ENCODE measurements at regions of chr15 and their contacts with region 1.

Region 1: DNA sequence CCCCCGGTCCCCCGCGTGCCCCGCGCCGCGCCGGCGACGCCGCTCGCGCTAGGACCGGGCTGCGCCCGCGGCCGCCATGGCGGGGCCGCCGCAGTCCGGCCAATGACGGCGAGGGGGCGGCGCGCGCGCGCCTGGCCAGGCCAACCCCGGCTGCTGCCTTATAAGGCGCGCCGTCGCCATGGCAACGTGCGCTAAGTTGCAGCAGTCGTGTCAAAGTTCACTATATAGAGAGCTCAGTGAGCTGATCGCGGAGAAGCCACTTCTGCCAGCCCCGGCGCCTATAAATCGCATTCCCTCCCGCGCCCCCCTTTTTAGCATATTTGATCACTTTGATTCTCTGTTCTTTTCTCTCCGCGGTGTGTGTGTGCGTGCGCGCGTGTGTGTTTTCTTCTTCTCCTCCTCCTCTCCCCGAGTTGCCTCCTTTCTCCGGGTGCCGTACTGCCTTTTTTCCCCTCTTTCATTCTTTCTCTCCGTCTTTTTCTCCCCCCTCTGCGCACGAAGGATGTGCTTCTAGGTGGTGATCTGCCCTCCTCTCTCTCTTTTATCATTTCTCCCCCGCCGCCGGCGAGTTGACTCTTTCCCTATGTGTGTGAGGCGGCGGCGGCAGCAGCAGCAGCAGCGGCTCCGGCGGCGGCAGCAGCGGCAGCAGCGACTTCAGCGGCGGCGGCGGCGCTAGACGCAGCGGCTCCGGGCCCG is at the start of gene NR2F2:
- DNase-seq: peak; percentile 53
- ATAC-seq: peak; percentile 70
- H3K4me3 ChIP-seq: peak within 1 kb of the TSS; percentile 78
- H3K27ac ChIP-seq: no peak within 1 kb of the TSS
- H3K4me1 ChIP-seq: peaks cover 6% of the 10 kb centered on the region; the same call in 1 of the 2 replicates
- H3K27me3 ChIP-seq: peaks cover 0 to 14% of the 10 kb centered on the region in 2 experiments; a peak in 1 of 4 replicates
- CTCF ChIP-seq: no peak
- EP300 ChIP-seq: no peak
- POLR2A ChIP-seq: no peak
- RAD21 ChIP-seq: no peak
- polyA plus RNA-seq, gene NR2F2: 2.3 to 3.2 TPM

Region 2: DNA sequence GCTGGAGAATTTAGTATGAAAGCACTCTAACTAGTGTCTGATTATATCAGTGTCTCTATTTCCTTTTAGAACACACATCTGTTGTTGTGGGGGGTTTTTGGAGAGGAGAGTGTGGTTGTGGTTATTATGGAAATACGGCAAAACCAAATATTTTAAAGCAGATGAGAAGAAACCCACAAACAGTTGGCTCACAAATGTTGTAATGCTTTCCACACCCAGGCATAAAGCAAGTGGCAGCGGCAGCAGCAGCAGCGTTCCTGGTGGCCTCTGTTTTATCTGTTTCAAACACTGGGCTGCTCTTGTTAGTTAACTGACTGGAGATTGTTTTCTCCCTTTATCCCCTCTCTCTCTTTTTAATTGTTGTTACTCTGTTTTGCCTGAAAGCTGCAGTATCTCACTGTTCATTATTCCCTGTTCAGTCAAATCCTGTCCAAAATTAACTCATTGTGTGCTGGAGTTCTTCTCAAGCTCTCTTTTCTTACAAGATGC is 1045.6 kb before region 1 on chr15:
- CTCF ChIA-PET with region 1: interaction called, 5 read pairs
- POLR2A ChIA-PET with region 1: no interaction called
- RAD21 ChIA-PET with region 1: interaction called, 22 read pairs
- SMC1A ChIA-PET with region 1: interaction called, 17 read pairs
- in situ Hi-C with region 1: no loop called
- intact Hi-C with region 1: no loop called
- DNase-seq: no peak
- ATAC-seq: peak; percentile 68
- H3K4me3 ChIP-seq: no peak overlapping the region
- H3K27ac ChIP-seq: no peak overlapping the region
- H3K4me1 ChIP-seq: peaks cover 4% of the 10 kb centered on the region; the same call in 1 of the 2 replicates
- H3K27me3 ChIP-seq: no peaks in the 10 kb centered on the region
- CTCF ChIP-seq: peak in 1 of 3 experiments; percentile 4; a peak in 1 of 6 replicates
- EP300 ChIP-seq: peak in 1 of 2 experiments; percentile 45; a peak in 1 of 4 replicates
- POLR2A ChIP-seq: no peak
- RAD21 ChIP-seq: 0 out of 2 replicates have a peak, but pooled peaks have one; percentile 18

Region 3: DNA sequence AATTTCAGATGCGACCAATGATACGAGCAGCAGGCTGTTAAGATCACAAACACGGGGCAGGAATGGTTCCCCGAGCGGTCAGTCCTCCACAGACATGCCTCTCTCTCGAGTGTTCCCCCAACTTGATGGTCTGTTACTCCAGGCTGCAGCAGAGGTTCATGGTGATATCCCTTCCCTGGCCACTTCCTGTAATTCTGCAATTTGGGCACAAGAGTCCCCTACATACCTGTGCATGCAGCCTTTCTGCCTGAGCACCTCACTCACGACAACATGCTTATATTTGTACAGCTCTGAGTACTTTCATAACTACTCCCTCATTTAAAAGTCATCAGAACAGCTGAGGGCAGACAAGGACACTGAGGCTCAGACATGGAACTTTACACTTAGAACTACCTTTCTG is 408.2 kb before region 1 on chr15:
- CTCF ChIA-PET with region 1: interaction called, 9 read pairs
- POLR2A ChIA-PET with region 1: no interaction called
- RAD21 ChIA-PET with region 1: interaction called, 9 read pairs
- SMC1A ChIA-PET with region 1: interaction called, 6 read pairs
- in situ Hi-C with region 1: no loop called
- intact Hi-C with region 1: loop called (anchors 5 kb)
- DNase-seq: peak; percentile 26
- ATAC-seq: peak; percentile 92
- H3K4me3 ChIP-seq: no peak overlapping the region
- H3K27ac ChIP-seq: no peak overlapping the region
- H3K4me1 ChIP-seq: no peaks in the 10 kb centered on the region
- H3K27me3 ChIP-seq: no peaks in the 10 kb centered on the region
- CTCF ChIP-seq: peak; percentile 27 to 61 (median 39); a peak in 4 of 6 replicates
- EP300 ChIP-seq: no peak
- POLR2A ChIP-seq: no peak
- RAD21 ChIP-seq: peak; percentile 83

Region 4: DNA sequence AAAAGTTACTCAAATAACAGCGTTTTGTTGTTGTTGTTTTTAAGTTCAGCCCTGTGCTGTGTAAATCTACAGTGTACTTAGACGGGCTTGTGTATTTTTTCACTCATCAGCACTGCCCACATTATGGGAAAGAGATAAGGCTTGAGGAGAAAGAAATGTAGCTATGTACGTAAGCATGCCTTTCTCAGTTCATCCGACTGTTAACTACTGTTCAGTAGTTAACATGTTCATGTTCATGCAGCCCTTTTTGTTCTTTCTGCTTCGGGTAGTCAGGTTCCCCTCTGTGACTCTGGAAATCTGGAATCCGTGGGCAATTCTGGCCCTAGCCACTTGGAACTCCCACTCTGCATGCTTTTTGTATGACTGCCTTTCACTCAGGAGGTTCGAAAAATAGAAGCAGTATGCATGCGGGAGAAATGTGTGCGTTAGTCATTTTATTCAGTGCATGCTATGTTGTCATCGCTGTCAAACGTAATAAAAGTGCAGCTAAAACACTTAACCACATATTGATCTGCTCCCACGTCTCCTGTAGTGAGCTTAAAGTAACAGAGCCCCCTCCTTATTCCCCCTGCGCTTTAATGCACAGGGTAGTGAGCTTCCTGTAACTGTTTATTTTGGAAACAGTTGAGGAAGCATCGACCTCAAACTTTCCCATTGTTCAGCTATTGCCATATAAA is 283.2 kb before region 1 on chr15:
- CTCF ChIA-PET with region 1: interaction called, 13 read pairs
- POLR2A ChIA-PET with region 1: no interaction called
- RAD21 ChIA-PET with region 1: interaction called, 7 read pairs
- SMC1A ChIA-PET with region 1: interaction called, 8 read pairs
- in situ Hi-C with region 1: no loop called
- intact Hi-C with region 1: loop called (anchors 2 kb)
- DNase-seq: no peak
- ATAC-seq: peak; percentile 42
- H3K4me3 ChIP-seq: no peak overlapping the region
- H3K27ac ChIP-seq: no peak overlapping the region
- H3K4me1 ChIP-seq: peaks cover 23% of the 10 kb centered on the region
- H3K27me3 ChIP-seq: no peaks in the 10 kb centered on the region
- CTCF ChIP-seq: no peak
- EP300 ChIP-seq: no peak
- POLR2A ChIP-seq: no peak
- RAD21 ChIP-seq: no peak

Region 5: DNA sequence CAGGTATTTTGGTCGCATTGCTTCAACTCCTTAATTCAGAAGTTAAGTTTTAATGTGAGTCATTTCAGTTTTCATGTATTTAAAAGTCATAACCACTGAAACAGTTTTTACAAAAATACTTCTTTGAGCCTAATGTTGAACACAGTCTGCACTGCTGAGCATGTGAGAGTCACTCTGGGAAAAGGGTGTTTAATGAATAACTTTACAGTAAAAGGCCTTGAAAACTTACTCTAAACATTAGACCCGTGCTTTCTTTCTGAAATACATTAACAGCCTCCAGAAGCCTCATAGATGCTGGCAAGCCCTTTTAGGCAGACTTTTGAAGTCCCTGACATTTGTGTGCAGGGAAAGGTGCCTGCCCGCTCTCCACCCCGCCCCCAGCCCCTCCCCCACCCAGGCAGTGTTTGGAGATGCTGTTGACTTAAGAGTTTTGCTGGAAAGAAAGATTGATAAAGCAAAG is 69.0 kb before region 1 on chr15:
- CTCF ChIA-PET with region 1: no interaction called
- POLR2A ChIA-PET with region 1: no interaction called
- RAD21 ChIA-PET with region 1: interaction called, 3 read pairs
- SMC1A ChIA-PET with region 1: interaction called, 6 read pairs
- in situ Hi-C with region 1: no loop called
- intact Hi-C with region 1: loop called (anchors 5 kb)
- DNase-seq: peak; percentile 64
- ATAC-seq: peak; percentile 90
- H3K4me3 ChIP-seq: no peak overlapping the region
- H3K27ac ChIP-seq: no peak overlapping the region
- H3K4me1 ChIP-seq: no peaks in the 10 kb centered on the region
- H3K27me3 ChIP-seq: no peaks in the 10 kb centered on the region
- CTCF ChIP-seq: no peak
- EP300 ChIP-seq: peak; percentile 67; a peak in 2 of 4 replicates
- POLR2A ChIP-seq: no peak
- RAD21 ChIP-seq: no peak

Region 6: DNA sequence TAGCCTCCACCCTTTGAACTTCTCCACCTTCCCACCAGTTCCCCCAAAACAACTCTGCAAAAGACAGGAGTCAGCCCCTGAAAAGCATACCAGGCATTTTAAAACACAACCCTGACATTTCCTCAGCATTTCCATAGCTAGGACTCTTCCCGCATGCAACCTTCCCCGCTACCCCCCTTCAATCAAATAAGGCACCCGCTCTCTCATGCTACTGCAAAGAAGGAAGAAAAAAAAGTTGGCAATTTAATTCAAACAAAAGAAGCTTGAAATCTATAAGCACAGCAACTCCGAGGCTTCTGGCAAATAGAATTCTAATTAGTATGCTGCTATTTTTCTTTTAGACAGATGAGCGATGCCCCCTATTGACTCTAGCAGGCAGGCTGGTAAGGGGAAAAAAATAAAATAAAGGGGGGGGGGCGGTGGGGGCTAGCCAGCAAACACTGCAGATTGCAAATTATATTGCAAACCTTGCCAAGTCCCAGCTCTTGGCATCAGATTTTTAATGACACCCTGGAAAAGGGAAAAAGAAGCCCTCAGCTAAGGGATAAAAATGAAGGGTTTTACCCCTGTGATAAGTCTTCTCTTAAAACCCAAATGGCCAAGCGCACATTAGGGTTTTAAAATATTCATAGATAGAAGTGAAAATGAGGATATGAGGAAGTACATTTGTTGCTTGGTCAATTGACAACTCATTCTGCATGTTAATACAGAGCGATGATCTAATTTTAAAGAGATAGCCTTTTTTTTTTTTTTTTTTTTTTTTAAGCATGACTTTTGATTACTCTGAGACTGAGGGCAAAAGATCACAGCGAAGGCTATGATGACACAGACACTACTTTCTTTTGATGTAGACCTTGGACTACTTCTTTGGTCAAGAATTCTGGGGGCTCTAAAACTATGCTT is 255.1 kb after region 1 on chr15:
- CTCF ChIA-PET with region 1: interaction called, 26 read pairs
- POLR2A ChIA-PET with region 1: no interaction called
- RAD21 ChIA-PET with region 1: interaction called, 22 read pairs
- SMC1A ChIA-PET with region 1: interaction called, 13 read pairs
- in situ Hi-C with region 1: no loop called
- intact Hi-C with region 1: no loop called
- DNase-seq: no peak
- ATAC-seq: peak; percentile 73
- H3K4me3 ChIP-seq: no peak overlapping the region
- H3K27ac ChIP-seq: no peak overlapping the region
- H3K4me1 ChIP-seq: no peaks in the 10 kb centered on the region
- H3K27me3 ChIP-seq: no peaks in the 10 kb centered on the region
- CTCF ChIP-seq: peak in 2 of 3 experiments; percentile 10 to 35; a peak in 2 of 6 replicates
- EP300 ChIP-seq: no peak
- POLR2A ChIP-seq: no peak
- RAD21 ChIP-seq: no peak

Region 7: DNA sequence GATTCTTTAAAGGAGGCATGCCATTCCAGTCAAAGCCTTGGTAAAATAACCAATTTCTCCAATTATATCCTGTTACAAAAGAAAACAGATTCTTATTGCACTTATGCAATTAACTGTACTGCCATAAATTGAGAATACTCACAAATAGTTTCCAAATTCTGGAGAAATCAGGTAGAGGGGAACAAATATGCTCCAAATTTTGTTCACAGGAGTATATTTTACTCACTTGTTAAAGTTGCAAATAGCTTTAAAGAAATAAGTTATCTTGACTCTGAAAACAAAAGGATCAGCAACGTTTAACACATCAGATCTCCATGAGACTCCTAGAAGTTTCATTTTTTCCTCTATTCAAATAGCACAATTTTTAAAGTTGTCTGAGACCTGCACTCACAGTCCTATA is 917.8 kb after region 1 on chr15:
- CTCF ChIA-PET with region 1: interaction called, 47 read pairs
- POLR2A ChIA-PET with region 1: interaction called, 4 read pairs
- RAD21 ChIA-PET with region 1: interaction called, 37 read pairs
- SMC1A ChIA-PET with region 1: interaction called, 32 read pairs
- in situ Hi-C with region 1: no loop called
- intact Hi-C with region 1: no loop called
- DNase-seq: no peak
- ATAC-seq: no peak
- H3K4me3 ChIP-seq: no peak overlapping the region
- H3K27ac ChIP-seq: no peak overlapping the region
- H3K4me1 ChIP-seq: no peaks in the 10 kb centered on the region
- H3K27me3 ChIP-seq: no peaks in the 10 kb centered on the region
- CTCF ChIP-seq: no peak
- EP300 ChIP-seq: no peak
- POLR2A ChIP-seq: no peak
- RAD21 ChIP-seq: no peak

Measured in GM12878 (cell line).